ENCODE measurements at regions of chr1 and their contacts with region 1.

Region 1: DNA sequence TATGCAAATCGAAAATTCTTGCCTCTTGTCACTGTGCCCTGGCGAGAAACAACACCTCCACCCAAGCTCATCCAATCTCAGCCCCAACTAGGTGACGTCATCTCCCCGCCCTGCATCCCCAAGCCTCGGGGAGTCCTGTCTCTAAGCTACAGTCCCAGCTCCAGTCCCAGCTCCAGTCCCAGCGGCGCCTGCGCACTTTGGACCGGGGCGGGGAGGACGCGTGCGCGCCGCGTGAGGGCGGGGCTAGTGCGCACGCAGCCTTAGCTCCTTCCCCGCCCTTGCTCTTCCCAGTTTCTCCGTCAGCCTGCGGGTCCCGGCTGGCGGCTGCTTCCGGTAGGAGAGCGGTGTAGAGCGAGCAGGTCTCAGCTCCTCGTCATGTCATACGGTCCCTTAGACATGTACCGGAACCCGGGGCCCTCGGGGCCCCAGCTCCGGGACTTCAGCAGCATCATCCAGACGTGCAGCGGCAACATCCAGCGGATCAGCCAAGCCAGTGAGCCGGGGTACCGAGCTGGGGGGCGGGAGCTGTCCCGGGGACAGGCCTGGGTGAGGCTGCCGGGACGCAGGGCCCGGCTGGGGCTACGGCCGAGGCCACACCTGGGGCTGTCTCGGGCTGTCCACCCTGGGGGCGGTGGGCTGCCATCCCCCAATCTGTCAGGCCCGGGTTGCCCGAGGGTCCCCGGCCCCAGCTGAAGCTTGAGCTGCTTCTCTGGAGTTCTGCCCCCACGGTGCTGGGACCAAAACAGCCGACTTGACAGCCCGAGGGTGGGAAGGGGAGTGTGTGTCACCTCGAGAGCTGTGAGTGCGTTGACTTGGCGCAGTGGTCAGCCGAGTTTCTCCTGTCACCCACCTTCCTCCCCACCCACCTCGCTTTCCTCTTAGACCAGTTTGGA is at the start of gene STX12:
- DNase-seq: peak; percentile 98
- total RNA-seq, gene STX12: 27.4 TPM

Region 2: DNA sequence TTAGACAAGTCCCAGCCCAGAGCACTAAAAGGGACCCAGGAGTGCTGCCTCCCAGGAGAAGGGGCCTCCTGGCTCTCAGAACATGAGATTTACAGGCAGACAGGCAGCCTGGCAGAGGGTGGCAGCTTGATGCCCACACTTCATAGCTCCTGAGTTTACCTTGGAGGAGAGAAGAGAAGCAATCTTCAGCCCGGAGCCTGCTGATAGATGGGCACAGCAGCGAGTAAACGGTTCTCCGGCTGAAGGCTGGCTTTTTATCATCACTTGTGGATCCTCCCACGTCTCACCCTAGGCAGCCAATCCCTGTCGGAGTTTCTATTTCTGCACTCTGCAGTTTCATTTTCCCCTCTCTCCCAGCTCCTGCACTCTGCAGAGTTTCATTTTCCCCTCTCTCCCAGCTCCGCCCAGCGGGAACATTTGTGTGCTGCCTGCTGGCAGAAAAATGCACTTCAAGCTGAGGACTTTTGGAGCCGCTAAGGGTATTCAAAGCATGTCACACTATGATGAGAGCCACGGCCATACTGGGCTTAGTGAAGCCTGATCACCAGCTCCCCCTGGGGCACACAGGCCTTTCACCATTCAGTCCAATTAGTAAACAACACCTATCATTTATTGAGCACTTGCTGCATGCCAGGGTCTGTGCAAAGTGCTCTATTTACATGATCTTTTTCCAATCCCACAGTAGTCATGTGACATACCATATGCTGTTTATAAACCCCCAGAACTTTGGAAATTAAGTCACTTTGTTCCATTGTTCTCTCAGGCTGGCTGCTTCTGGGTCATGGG is 101.0 kb before region 1 on chr1 and contains the start of gene IFI6:
- intact Hi-C with region 1: loop called (anchors 5 kb)
- DNase-seq: peak; percentile 94
- total RNA-seq, gene IFI6: 32.4 TPM

Region 3: DNA sequence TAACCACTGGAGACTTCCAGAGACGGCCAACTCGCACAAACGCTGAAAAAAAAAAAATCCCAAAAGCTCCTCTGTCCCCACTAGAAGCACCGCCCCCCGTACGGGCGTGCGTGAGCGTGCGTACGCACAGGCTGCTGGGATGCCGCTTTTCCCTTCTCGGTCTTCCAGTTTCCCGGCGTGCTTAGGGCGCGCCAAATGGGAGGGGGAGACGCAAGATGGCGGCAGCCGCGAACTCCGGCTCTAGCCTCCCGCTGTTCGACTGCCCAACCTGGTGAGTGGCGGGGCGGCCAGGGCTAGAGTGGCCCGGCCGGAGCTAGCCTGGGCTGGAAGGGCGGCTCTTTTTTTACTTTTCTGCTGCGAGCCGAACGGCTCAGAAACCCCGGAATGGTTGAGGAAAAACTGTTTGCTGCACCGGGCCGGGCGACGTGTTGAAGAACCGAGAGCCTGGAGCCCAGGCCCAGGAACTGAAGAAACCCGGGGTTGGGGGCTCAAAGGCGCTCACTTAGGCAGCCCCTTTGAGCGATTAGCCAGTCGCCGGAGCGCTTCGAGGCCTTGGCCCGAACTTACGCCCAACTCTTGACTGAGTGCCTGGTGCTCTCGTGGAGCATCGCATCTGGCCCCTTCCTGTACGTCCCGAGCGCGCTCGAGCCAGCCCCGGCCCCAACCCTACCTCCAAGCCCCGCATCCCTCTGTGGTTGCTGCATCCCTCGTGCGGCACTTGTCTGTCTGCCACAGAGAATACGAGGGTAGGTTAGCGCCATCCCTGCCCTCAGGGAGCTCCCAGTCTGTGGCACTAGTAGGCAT is 57.6 kb after region 1 on chr1 and contains the start of gene PPP1R8:
- intact Hi-C with region 1: loop called (anchors 5 kb)
- DNase-seq: peak; percentile 96
- total RNA-seq, gene PPP1R8: 23.8 TPM

Region 4: DNA sequence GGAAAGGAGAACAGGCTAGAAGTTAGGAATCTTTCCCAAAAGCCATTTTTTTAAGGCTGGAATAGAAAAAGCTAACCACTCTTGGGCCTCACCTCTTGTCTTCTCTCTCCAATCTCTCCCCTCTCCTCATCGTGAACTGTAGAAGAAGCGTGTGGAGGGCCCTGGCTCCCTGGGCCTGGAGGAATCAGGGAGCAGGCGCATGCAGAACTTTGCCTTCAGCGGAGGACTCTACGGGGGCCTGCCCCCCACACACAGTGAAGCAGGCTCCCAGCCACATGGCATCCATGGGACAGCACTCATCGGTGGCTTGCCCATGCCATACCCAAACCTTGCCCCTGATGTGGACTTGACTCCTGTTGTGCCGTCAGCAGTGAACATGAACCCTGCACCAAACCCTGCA is 76.8 kb after region 1 on chr1:
- intact Hi-C with region 1: no loop called
- DNase-seq: no peak

Region 5: DNA sequence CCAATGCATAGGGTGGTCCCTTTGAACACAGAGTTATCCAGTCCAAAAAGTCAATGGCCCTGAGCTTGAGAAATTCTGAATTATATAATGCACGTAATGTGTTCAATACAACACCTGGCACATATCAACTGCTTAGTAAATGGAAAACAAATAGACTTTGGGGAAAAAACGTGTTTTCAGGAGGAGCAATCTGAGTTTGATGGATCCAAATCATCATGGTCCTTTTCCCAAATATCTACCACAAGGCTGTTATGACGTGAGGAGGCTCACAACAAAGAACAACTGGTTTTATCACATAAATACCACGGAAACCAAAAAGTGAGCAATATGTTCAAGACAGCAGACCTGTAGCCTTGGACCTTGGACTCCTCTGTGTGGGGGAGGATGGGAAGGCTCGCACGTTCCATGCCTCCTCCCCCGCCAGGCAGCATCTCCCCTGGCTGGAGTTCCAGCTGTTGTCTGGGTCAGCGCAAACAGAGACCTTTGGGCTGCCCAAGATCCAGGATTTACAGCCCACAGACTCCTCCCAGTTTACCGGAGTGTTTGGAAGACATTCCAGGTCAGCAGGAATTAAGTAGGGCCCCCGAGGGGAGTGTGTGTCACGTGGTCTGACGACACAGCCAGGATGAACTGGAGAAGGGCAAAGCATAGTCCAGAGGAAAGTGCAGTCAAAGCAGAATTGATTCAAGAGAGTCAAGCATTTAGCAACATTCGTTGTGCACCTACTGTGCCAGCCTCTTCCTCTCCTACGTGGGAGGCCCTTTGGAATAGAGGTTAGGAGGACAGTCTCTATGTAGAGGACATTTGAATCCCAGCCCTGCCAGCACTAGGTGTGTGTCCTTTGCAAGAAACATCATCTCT is 523.5 kb after region 1 on chr1:
- intact Hi-C with region 1: no loop called
- DNase-seq: no peak

Measured in cardiac septum (tissue), 1 donor.